ENCODE measurements at regions of chr7 and their contacts with region 1.

Region 1: DNA sequence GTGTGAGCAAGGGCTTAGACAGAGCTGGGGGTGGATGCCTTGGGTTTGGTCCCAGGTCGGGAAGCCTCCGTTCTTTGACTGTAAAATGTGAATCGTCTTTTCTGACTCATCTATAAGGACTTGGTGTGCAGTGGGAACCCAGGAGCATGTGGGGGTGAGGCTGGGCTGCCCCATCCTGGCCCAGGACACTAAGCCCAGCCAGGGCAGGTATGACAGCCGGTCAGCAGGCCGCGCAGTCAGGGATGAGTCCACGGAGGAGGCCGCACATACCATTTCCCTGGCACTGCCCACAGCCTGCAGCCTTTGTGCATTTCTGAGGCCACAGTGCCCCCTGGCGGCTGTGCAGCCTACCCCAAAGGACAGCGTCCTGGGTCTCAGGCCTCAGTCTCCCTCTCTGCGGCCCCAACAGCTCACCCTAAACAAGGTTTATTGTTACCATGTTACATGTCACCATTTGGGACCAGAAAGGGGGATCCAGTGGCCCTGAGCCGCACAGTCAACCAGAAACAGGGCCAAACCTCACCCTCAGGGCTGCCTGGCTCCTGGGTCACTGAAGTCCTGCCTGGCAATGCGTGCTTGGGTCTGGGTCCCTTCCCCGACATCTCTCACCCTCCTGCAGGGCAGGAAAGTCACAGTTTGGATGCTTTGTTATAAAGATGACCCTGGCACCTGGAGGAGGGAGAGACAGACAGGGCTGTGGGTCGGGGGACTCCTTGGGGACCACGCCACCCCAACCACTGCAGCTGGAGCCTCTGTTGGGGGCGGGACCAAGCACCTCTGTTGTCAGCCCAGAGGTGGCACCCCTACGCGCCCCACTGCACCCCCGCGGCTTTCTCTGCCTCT is 14.4 kb upstream of the SH2B2 start:
- DNase-seq: peak; percentile 82
- H3K4me3 Mint-ChIP-seq: no peak overlapping the region
- H3K27ac Mint-ChIP-seq: no peak overlapping the region
- H3K4me1 Mint-ChIP-seq: no peaks in the 10 kb centered on the region
- H3K27me3 Mint-ChIP-seq: peaks cover 4% of the 10 kb centered on the region

Region 2: GRCh38 chr7:101542527-101543241 is 729.6 kb before region 1 on chr7:
- CTCF ChIA-PET with region 1: interaction called, 10 read pairs
- DNase-seq: peak; percentile 84
- H3K4me3 Mint-ChIP-seq: no peak overlapping the region
- H3K27ac Mint-ChIP-seq: no peak overlapping the region
- H3K4me1 Mint-ChIP-seq: no peaks in the 10 kb centered on the region
- H3K27me3 Mint-ChIP-seq: peaks cover 8% of the 10 kb centered on the region

Region 3: DNA sequence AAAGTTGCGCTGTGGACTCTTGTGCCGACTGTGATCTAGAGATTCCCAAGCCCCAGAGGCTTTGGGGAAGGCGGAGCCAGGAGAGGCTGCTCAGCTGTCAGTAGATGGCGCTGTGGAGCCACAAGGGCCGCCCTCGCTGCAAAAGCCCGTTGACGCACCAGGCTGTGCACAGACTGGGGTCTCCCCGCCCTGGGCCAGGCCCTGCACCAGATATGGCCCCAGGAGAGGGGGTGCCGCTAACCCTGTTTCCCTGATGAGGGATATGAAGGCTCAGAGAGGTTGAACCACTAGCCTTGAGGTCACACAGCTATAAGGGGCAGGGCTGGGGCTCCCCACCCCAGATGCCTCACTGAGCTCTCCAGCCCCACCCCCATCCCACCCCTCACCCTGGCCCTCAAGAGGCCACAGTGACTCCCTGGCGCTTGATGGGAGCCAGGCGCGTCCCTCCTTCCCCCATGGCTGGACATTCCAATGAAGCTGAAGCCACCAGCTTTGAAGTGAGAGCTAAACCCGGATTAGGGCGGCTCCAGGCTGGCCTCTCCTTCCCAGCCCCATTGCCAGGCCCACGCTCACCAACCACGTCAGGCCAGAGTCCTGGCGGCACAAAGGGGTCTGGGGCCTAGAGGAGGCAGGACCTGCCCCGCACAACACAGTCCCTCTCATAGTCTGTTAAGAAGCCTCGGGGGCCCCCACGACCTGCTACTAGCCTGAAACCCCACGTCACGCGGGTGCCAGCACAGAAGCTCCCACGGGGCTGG is 669.6 kb before region 1 on chr7:
- CTCF ChIA-PET with region 1: interaction called, 25 read pairs
- DNase-seq: peak; percentile 81
- H3K4me3 Mint-ChIP-seq: no peak overlapping the region
- H3K27ac Mint-ChIP-seq: no peak overlapping the region
- H3K4me1 Mint-ChIP-seq: no peaks in the 10 kb centered on the region
- H3K27me3 Mint-ChIP-seq: peaks cover 6% of the 10 kb centered on the region

Measured in activated naive CD4-positive, alpha-beta T cell treated with anti-CD3 and anti-CD28 coated beads, Interleukin-2, amount 10 ng/mL, durations not matched to agents 7 days and 5 days (primary cell).